Vagina (tissue), 2 donors: ENCODE measurements at regions of chr4 and their contacts with region 1.

Region 1: GRCh38 chr4:26135331-26135730 is 185.5 kb upstream of the RBPJ start:
- DNase-seq: no peak
- H3K4me3 ChIP-seq: no peak overlapping the region
- H3K27ac ChIP-seq: no peak overlapping the region
- H3K4me1 ChIP-seq: peaks cover 12% of the 10 kb centered on the region
- H3K27me3 ChIP-seq: no peaks in the 10 kb centered on the region
- CTCF ChIP-seq: no peak
- POLR2A ChIP-seq: no peak

Region 2: DNA sequence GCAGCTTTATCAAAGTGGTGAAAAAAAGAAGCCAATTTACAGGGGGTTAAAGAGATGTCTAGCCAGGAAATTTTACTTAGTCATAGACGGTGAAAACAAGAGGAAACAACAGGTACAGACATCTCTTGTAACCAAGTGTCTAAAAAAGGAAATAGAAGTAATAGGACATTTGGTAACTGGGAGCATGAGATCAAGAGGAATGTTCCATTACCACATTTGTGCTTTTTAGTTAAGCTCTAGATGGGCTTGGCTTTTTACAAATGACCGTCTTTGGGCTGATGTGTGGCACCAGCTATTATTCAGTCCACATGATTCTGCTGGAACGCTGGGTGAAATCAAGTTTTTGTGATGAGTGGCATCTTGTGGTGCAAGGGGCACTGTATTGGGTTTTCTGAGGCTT is 41.8 kb before region 1 on chr4:
- intact Hi-C with region 1: loop called (anchors 2 kb)
- DNase-seq: no peak
- H3K4me3 ChIP-seq: no peak overlapping the region
- H3K27ac ChIP-seq: no peak overlapping the region
- H3K4me1 ChIP-seq: no peaks in the 10 kb centered on the region
- H3K27me3 ChIP-seq: no peaks in the 10 kb centered on the region
- CTCF ChIP-seq: no peak
- POLR2A ChIP-seq: no peak